Posterior cingulate gyrus (tissue), 11 donors: ENCODE measurements at regions of chr16 and their contacts with region 1.

Region 1: DNA sequence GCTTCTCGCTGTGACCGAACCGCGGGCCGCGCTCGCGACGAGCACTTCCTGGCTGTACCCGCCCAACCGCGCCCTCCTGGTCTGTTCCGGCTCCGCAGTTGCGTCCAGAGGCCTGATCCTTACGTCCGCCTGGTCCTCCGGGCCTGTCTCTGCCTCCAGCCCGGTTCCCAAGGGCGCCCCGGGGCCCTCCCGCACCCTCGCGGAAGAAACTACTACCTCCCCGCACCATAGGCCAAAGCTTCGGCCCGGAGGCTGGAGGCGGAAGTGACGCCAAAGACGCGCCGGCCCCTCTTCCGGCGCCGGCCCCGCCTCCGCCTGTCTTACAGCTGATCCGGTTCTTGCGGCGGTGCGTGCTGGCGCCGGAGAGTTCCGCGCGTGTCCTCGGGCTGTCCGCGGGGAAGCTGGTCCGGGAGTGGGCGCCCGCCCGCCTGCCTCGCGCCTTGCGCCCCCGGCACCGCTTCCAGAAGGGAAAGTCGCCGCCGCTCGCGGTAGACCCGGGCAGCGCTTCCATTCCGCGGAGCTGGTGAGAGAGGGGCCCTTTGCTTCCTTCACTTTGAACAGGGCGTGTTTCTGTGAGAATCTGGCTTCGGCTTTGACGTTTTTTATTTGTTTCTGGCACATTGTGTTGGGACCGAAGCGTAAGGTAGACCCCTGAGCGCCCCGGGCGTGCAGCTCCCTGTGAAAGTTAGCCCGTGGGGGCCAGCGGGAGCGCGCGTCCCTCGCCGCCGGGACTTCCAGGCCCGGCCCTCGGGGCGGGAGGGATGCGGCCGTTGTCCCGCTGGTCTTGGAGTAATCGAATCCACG is at the start of gene ZNF778:
- DNase-seq: peak; percentile 63 to 98 (median 81)

Region 2: DNA sequence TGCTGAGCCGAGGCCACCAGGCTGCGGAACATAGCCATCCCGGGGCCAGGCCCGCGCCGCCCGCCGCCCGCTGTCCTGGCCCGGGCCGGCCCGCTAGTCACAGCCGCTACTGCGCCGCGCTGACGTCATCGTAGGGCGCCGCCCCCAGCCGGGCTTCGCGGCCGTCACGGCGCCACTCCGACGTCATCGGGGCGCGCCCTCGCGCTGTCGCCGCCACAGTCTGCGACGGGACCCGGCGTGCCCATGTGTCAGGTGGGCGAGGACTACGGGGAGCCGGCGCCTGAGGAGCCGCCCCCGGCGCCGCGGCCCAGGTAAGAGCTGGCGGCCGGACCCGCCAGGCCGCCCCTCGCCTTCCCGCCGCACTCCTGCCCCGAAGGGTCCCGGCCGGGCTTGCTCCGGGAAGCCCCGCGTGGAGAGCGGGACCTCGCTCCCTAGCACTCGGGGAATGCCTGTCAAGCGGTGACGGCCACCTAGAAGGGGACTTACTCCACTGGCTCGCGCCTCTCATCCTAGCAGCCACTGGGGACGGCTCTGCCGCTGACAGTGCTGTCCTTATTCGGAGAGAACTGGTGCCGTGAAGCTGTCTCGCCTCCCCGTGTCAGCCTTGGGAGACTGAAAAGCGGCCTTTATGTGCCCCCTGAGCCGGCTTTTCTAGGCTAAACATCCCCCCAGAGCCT is 511.2 kb before region 1 on chr16 and contains the starts of genes CTU2 and RNF166:
- intact Hi-C with region 1: loop called (anchors 2 kb)
- DNase-seq: peak; percentile 83 to 98 (median 87)

Region 3: GRCh38 chr16:88941913-88942909 is 275.4 kb before region 1 on chr16:
- intact Hi-C with region 1: loop called (anchors 5 kb)
- DNase-seq: peak in 3 of 10 donors; percentile 45 to 50 (median 48)

Region 4: GRCh38 chr16:89241187-89242007 is 23.8 kb after region 1 on chr16:
- intact Hi-C with region 1: loop called (anchors 1 kb)
- DNase-seq: peak; percentile 57 to 96 (median 70)